HepG2 (cell line): ENCODE measurements at regions of chr12 and their contacts with region 1.

Region 1: GRCh38 chr12:76348079-76348901 is at the start of gene BBS10:
- DNase-seq: peak; percentile 86
- ATAC-seq: peak; percentile 99
- H3K4me3 ChIP-seq: peak within 1 kb of the TSS; percentile 73 to 93 (median 92)
- H3K27ac ChIP-seq: peak within 1 kb of the TSS; percentile 80
- H3K4me1 ChIP-seq: peaks cover 19% of the 10 kb centered on the region
- H3K27me3 ChIP-seq: no peaks in the 10 kb centered on the region; a peak in 1 of 5 replicates
- CTCF ChIP-seq: peak; percentile 74
- EP300 ChIP-seq: no peak
- POLR2A ChIP-seq: peak; percentile 72 to 78
- RAD21 ChIP-seq: peak; percentile 18; the same call in 1 of the 2 replicates
- total RNA-seq, gene BBS10: 7.4 and 11.5 TPM in 2 replicates

Region 2: GRCh38 chr12:75480469-75480949 is 867.8 kb before region 1 on chr12 and contains the start of gene GLIPR1:
- CTCF ChIA-PET with region 1: no interaction called
- POLR2A ChIA-PET with region 1: no interaction called
- in situ Hi-C with region 1: no loop called
- intact Hi-C with region 1: loop called (anchors 10 kb)
- DNase-seq: peak; percentile 45
- ATAC-seq: peak; percentile 90
- H3K4me3 ChIP-seq: peak within 1 kb of the TSS; percentile 44 to 50 (median 47); a peak in 5 of 6 replicates
- H3K27ac ChIP-seq: no peak within 1 kb of the TSS
- H3K4me1 ChIP-seq: peaks cover 26% of the 10 kb centered on the region
- H3K27me3 ChIP-seq: no peaks in the 10 kb centered on the region
- CTCF ChIP-seq: no peak
- EP300 ChIP-seq: no peak
- POLR2A ChIP-seq: 0 out of 4 replicates have a peak, but pooled peaks of 1 of the 2 experiments have one; percentile 23
- RAD21 ChIP-seq: no peak
- total RNA-seq, gene GLIPR1: 2.8 and 5.0 TPM in 2 replicates

Region 3: GRCh38 chr12:75511116-75512048 is 836.9 kb before region 1 on chr12 and contains the start of gene KRR1:
- CTCF ChIA-PET with region 1: no interaction called
- POLR2A ChIA-PET with region 1: interaction called, 11 read pairs
- in situ Hi-C with region 1: loop called (anchors 10 kb)
- intact Hi-C with region 1: no loop called
- DNase-seq: peak; percentile 98
- ATAC-seq: peak; percentile 100
- H3K4me3 ChIP-seq: peak within 1 kb of the TSS; percentile 80 to 89 (median 88)
- H3K27ac ChIP-seq: peak within 1 kb of the TSS; percentile 68
- H3K4me1 ChIP-seq: peaks cover 36% of the 10 kb centered on the region
- H3K27me3 ChIP-seq: no peaks in the 10 kb centered on the region; a peak in 2 of 5 replicates
- CTCF ChIP-seq: peak; percentile 24; the same call in 1 of the 2 replicates
- EP300 ChIP-seq: no peak
- POLR2A ChIP-seq: peak; percentile 46 to 88; a peak in 3 of 4 replicates
- RAD21 ChIP-seq: peak; percentile 59
- total RNA-seq, gene KRR1: 103 and 161 TPM in 2 replicates

Region 4: DNA sequence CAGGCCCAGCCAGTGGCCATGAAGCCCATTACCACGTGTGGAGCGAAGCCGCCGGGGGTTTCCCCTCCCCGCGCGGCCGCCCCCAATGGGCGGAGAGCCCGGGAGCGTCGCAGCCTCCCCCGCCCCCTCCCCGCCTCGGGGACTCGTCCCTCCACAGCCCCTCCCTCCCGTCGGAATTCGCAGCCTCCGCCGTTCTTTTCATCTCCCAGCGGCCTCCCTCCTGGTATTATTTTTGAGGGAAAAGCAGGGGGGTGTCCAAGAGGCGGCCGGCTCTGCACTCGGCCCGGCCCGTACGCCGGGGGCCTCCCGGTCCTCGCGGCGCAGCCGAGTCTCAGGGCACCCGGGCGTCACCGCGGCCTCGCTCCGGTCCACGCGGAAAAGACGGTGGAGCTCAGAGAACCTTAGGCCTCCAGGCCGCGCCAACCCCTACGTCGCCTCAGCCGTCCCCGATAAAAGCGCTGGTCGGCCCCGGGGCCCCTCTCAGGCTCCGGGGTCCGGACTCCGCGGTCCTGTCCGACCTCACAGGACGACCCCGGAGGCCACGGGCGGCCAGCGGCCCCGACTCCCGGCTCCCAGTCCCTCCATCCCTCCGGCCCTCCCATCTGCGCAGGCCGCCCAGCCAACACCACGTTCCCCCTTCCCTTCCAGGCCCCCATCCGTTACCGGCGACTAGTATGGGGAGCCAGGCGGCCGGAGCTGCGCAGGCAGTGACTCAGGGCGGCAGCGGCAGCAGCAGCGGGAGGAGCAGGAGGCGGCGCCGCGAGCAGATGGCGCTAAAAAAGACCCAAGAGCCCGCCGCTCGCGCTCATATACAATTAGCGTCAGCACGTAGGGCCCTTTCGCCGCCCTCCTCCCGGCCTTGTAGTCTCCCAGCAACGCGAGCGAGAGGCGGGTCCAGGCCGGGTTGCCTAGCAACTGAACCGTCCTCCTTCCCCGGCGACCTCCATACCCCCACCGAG is 264.1 kb before region 1 on chr12 and contains the start of gene NAP1L1:
- CTCF ChIA-PET with region 1: no interaction called
- POLR2A ChIA-PET with region 1: no interaction called
- in situ Hi-C with region 1: no loop called
- intact Hi-C with region 1: loop called (anchors 2 kb)
- DNase-seq: peak; percentile 94
- ATAC-seq: peak; percentile 89
- H3K4me3 ChIP-seq: peak within 1 kb of the TSS; percentile 73 to 88 (median 74)
- H3K27ac ChIP-seq: peak within 1 kb of the TSS; percentile 95
- H3K4me1 ChIP-seq: peaks cover 56% of the 10 kb centered on the region
- H3K27me3 ChIP-seq: no peaks in the 10 kb centered on the region
- CTCF ChIP-seq: no peak
- EP300 ChIP-seq: no peak
- POLR2A ChIP-seq: peak; percentile 85 to 88
- RAD21 ChIP-seq: 0 out of 2 replicates have a peak, but pooled peaks have one; percentile 3
- total RNA-seq, gene NAP1L1: 309 and 454 TPM in 2 replicates

Region 5: DNA sequence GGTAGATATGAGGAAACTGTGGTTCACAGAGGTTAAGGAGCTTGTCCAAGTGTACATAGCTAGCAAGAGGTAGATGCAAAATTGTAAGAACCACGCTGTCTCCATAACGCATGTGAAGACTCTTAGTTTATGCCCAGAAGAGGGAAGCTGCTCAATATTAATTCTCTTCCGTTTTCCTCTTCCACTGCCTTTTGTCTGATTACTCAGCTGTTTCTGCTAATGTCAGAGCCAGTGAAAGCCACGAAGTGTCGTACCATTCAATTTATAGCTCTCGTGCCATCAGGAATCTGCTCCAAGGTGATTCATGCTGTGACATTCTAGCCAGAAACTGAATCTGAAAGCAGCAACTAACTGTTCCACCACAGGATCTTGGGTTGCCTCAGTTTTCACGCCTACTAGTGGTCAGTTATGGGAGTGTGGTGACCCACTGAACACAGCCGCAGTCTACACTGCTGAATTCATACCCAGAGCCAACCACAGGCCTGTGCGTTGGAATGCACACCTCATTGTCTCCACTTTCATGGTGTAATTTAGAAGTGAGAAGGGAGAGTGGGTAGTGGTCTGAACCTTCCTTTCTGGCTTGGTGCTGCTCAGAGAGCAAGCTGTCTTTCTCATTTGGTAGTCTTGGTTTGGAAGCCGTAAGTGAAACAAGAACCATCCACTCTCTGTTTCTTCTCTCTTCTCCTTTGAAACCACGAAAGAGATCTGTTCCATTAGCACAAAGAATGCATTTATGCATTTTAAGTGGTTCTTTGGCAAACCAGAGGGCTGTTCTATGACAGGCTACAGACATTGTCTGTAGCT is 189.6 kb before region 1 on chr12:
- CTCF ChIA-PET with region 1: no interaction called
- POLR2A ChIA-PET with region 1: no interaction called
- in situ Hi-C with region 1: no loop called
- intact Hi-C with region 1: loop called (anchors 1 kb)
- DNase-seq: peak; percentile 53
- ATAC-seq: peak; percentile 100
- H3K4me3 ChIP-seq: peak overlapping the region in 1 of 3 experiments; percentile 39; a peak in 1 of 6 replicates
- H3K27ac ChIP-seq: no peak overlapping the region
- H3K4me1 ChIP-seq: 0 out of 2 replicates have a peak, but pooled peaks cover 4% of the 10 kb centered on the region
- H3K27me3 ChIP-seq: no peaks in the 10 kb centered on the region; a peak in 1 of 5 replicates
- CTCF ChIP-seq: peak; percentile 85
- EP300 ChIP-seq: no peak
- POLR2A ChIP-seq: no peak
- RAD21 ChIP-seq: no peak; the same call in 1 of the 2 replicates

Region 6: GRCh38 chr12:76445469-76445868 is 97.2 kb after region 1 on chr12:
- CTCF ChIA-PET with region 1: no interaction called
- POLR2A ChIA-PET with region 1: no interaction called
- in situ Hi-C with region 1: no loop called
- intact Hi-C with region 1: no loop called
- DNase-seq: no peak
- ATAC-seq: no peak
- H3K4me3 ChIP-seq: no peak overlapping the region
- H3K27ac ChIP-seq: no peak overlapping the region
- H3K4me1 ChIP-seq: no peaks in the 10 kb centered on the region
- H3K27me3 ChIP-seq: no peaks in the 10 kb centered on the region
- CTCF ChIP-seq: no peak
- EP300 ChIP-seq: no peak
- POLR2A ChIP-seq: no peak
- RAD21 ChIP-seq: no peak

Region 7: DNA sequence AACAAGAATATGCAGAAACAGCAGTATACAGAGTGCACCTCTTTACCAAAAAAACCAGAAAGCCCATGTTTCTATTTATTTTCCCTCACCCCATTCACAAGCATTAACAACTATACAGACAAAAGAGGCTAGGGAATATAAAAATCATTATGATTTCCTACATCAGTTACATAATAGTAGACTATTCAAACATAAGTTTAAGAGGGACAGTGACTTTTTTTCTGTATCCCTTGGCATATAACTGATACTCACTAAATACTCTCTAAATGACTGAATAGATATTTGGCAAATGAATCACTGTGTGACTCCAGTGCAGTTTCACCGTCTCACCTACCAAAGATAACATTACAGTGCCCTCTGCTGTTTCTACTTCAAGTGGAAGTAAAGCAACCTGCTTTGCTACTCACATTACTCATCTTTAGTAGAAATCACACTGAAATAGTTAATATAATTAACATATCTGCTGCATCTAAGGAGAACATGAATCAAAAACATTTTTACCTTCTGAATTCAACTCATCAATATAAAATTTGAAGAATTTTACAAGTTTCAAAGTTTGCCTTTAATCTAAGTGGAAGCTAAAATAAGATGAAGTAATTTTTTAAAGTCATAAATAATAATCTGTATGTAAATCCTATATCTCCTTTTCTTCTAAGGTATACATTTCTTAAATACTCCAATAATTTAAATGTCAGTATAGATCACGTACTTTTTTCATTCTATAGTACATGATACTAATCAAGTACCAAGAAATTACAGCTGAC is 107.5 kb after region 1 on chr12:
- CTCF ChIA-PET with region 1: no interaction called
- POLR2A ChIA-PET with region 1: no interaction called
- in situ Hi-C with region 1: no loop called
- intact Hi-C with region 1: loop called (anchors 1 kb)
- DNase-seq: peak; percentile 62
- ATAC-seq: peak; percentile 90
- H3K4me3 ChIP-seq: no peak overlapping the region
- H3K27ac ChIP-seq: no peak overlapping the region
- H3K4me1 ChIP-seq: peaks cover 12% of the 10 kb centered on the region
- H3K27me3 ChIP-seq: no peaks in the 10 kb centered on the region
- CTCF ChIP-seq: peak; percentile 76
- EP300 ChIP-seq: no peak
- POLR2A ChIP-seq: no peak
- RAD21 ChIP-seq: peak; percentile 43; the same call in 1 of the 2 replicates